Caco-2 (cell line): ENCODE measurements at regions of chr10 and their contacts with region 1.

Region 1: DNA sequence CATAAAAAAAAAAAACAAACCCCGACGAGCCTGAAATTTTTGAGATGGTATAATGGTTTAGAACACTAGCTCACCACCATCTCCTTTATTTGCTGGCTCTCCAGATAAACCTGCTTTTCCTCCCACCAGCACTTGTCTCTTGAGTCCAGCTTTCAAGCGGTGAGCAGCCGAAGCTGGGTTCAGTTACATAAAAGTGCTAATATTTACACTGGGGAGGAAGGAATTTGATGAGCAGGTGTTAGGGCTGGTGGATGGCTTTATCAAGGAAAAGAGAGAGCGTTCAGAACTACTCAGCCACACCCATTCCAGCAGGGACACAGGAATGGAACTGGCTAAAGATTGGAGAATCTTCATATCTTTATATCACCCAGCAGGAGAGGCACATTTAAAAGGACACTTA is 6.6 kb upstream of the CALML3 start:
- DNase-seq: peak; percentile 93 to 95
- H3K4me3 ChIP-seq: no peak overlapping the region
- H3K4me3 Mint-ChIP-seq: peak overlapping the region; percentile 44
- H3K27ac Mint-ChIP-seq: peak overlapping the region; percentile 70
- H3K4me1 ChIP-seq: peaks cover 56% of the 10 kb centered on the region
- H3K4me1 Mint-ChIP-seq: peaks cover 47% of the 10 kb centered on the region
- H3K27me3 ChIP-seq: no peaks in the 10 kb centered on the region
- H3K27me3 Mint-ChIP-seq: no peaks in the 10 kb centered on the region
- CTCF ChIP-seq: no peak

Region 2: GRCh38 chr10:5502903-5503835 is 15.0 kb before region 1 on chr10:
- CTCF ChIA-PET with region 1: interaction called, 6 read pairs
- POLR2A ChIA-PET with region 1: interaction called, 3 read pairs
- intact Hi-C with region 1: loop called (anchors 1 kb)
- DNase-seq: peak; percentile 83 to 84
- H3K4me3 ChIP-seq: no peak overlapping the region
- H3K4me3 Mint-ChIP-seq: peak overlapping the region; percentile 25
- H3K27ac Mint-ChIP-seq: peak overlapping the region; percentile 84
- H3K4me1 ChIP-seq: peaks cover 32% of the 10 kb centered on the region
- H3K4me1 Mint-ChIP-seq: peaks cover 38% of the 10 kb centered on the region
- H3K27me3 ChIP-seq: no peaks in the 10 kb centered on the region
- H3K27me3 Mint-ChIP-seq: no peaks in the 10 kb centered on the region
- CTCF ChIP-seq: no peak

Region 3: DNA sequence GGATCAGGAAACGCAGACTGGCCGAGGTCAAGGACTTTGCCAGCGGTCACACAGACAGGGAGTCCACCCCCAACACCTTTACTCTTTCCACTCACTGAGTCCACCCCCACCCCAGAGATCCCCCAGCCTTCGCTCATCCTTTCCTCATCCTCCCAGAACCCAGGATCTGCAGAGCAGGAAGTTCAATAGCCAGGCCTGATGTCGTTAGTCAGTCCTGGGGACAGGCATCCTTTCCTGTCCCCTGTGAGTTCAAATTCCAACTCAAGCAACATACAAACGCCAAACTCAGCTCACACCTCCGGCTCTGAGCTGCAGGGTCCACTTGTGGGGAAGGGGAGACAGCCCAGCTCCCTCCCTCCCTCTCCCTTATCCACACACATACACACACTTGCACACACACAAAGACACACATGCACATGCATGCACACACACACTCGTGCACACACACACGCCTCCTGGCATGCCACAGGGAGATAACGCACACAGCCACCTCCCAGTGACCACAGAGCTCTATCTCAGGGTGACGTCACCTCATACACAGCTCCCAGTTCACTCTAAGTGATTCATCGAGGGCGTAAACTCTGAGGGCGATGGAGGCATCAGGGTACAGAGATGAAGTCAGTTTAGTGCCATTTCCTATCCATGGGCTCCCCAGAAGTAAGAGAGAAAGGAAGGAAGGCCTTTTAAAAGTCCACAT is 30.5 kb after region 1 on chr10:
- CTCF ChIA-PET with region 1: interaction called, 4 read pairs
- POLR2A ChIA-PET with region 1: interaction called, 6 read pairs
- intact Hi-C with region 1: loop called (anchors 1 kb)
- DNase-seq: peak; percentile 77 to 90
- H3K4me3 ChIP-seq: no peak overlapping the region
- H3K4me3 Mint-ChIP-seq: no peak overlapping the region
- H3K27ac Mint-ChIP-seq: no peak overlapping the region
- H3K4me1 ChIP-seq: peaks cover 65% of the 10 kb centered on the region
- H3K4me1 Mint-ChIP-seq: peaks cover 21% of the 10 kb centered on the region
- H3K27me3 ChIP-seq: no peaks in the 10 kb centered on the region
- H3K27me3 Mint-ChIP-seq: no peaks in the 10 kb centered on the region
- CTCF ChIP-seq: no peak

Region 4: DNA sequence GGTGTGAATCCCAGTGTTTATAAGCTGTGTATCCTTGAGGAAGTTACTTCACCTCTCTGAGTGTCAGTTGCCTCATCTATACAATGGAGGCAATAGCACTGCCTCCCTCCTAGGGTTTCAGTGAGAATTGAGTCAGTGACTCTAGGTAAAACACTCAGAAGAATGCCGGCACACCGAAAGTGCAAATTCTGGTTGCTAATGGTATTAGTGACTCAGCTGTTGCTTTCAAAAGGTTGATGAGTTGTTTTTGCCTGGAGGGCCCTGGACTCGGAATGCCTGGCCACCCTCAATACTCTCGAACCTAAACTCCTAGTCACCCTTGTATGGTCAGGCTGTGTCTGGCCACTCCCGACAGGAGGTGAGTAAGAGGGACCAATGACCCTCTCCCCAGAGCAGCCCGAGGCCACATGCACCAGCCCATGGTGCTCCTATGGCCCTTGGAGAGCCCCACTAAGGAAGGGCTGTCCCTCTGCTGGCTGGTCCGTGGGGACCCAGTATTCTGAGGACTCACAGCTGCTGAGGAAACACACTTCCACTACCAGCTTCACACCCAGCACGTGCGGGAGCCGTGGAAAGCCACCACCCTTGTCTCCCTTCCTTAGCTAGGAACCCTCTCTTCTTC is 66.9 kb after region 1 on chr10:
- CTCF ChIA-PET with region 1: no interaction called
- POLR2A ChIA-PET with region 1: no interaction called
- intact Hi-C with region 1: loop called (anchors 5 kb)
- DNase-seq: no peak
- H3K4me3 ChIP-seq: no peak overlapping the region
- H3K4me3 Mint-ChIP-seq: no peak overlapping the region
- H3K27ac Mint-ChIP-seq: no peak overlapping the region
- H3K4me1 ChIP-seq: peaks cover 43% of the 10 kb centered on the region
- H3K4me1 Mint-ChIP-seq: peaks cover 36% of the 10 kb centered on the region
- H3K27me3 ChIP-seq: no peaks in the 10 kb centered on the region
- H3K27me3 Mint-ChIP-seq: no peaks in the 10 kb centered on the region
- CTCF ChIP-seq: no peak